Activated CD4-positive, alpha-beta T cell treated with anti-CD3 and anti-CD28 coated beads for 36 hours (primary cell): ENCODE measurements at regions of chr22 and their contacts with region 1.

Region 1: GRCh38 chr22:24156913-24157821 is 24.1 kb upstream of the SUSD2 start:
- DNase-seq: peak; percentile 92
- ATAC-seq: peak; percentile 76
- H3K4me3 Mint-ChIP-seq: peak overlapping the region; percentile 79
- H3K27ac Mint-ChIP-seq: peak overlapping the region; percentile 75
- H3K4me1 Mint-ChIP-seq: peaks cover 59% of the 10 kb centered on the region
- H3K27me3 Mint-ChIP-seq: no peaks in the 10 kb centered on the region

Region 2: GRCh38 chr22:24011735-24012068 is 145.5 kb before region 1 on chr22:
- CTCF ChIA-PET with region 1: no interaction called
- POLR2A ChIA-PET with region 1: no interaction called
- intact Hi-C with region 1: loop called in 1 of 2 experiments (anchors 5 kb)
- DNase-seq: no peak
- ATAC-seq: no peak
- H3K4me3 Mint-ChIP-seq: peak overlapping the region; percentile 92
- H3K27ac Mint-ChIP-seq: peak overlapping the region; percentile 94
- H3K4me1 Mint-ChIP-seq: peaks cover 27% of the 10 kb centered on the region
- H3K27me3 Mint-ChIP-seq: no peaks in the 10 kb centered on the region

Region 3: GRCh38 chr22:24106385-24107381 is 50.5 kb before region 1 on chr22:
- CTCF ChIA-PET with region 1: interaction called, 3 read pairs
- POLR2A ChIA-PET with region 1: interaction called, 3 read pairs
- intact Hi-C with region 1: loop called in 1 of 2 experiments (anchors 2 kb)
- DNase-seq: peak; percentile 41
- ATAC-seq: peak; percentile 88
- H3K4me3 Mint-ChIP-seq: no peak overlapping the region
- H3K27ac Mint-ChIP-seq: peak overlapping the region; percentile 69
- H3K4me1 Mint-ChIP-seq: peaks cover 31% of the 10 kb centered on the region
- H3K27me3 Mint-ChIP-seq: no peaks in the 10 kb centered on the region

Region 4: GRCh38 chr22:24133187-24133965 is 23.8 kb before region 1 on chr22:
- CTCF ChIA-PET with region 1: interaction called, 9 read pairs
- POLR2A ChIA-PET with region 1: interaction called, 11 read pairs
- intact Hi-C with region 1: no loop called
- DNase-seq: peak; percentile 43
- ATAC-seq: peak; percentile 47
- H3K4me3 Mint-ChIP-seq: no peak overlapping the region
- H3K27ac Mint-ChIP-seq: peak overlapping the region; percentile 5
- H3K4me1 Mint-ChIP-seq: peaks cover 28% of the 10 kb centered on the region
- H3K27me3 Mint-ChIP-seq: no peaks in the 10 kb centered on the region

Region 5: DNA sequence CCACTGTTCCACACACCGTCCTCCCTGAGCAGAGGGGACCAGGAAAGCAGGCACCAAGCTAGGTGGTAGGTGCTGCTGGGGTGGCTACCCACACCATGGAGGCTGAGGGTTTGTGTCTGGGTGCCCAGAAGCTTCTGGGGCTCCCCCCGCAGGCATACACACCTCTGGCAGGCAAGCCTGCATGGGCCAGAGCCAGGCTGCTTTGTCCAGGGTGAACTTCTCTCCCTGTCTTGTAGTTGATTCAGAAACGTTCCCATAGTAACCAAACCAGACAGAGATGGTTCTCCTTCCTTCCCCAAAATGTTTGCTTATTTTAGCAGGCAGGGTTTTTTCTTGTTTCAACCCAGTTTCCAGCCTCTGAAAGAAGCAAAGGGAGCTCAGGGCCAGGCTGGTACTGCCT is 16.8 kb before region 1 on chr22:
- CTCF ChIA-PET with region 1: interaction called, 10 read pairs
- POLR2A ChIA-PET with region 1: interaction called, 3 read pairs
- intact Hi-C with region 1: no loop called
- DNase-seq: no peak
- ATAC-seq: no peak
- H3K4me3 Mint-ChIP-seq: no peak overlapping the region
- H3K27ac Mint-ChIP-seq: no peak overlapping the region
- H3K4me1 Mint-ChIP-seq: peaks cover 56% of the 10 kb centered on the region
- H3K27me3 Mint-ChIP-seq: no peaks in the 10 kb centered on the region